Activated CD4-positive, alpha-beta memory T cell treated with anti-CD3 and anti-CD28 coated beads for 36 hours (primary cell): ENCODE measurements at regions of chr22 and their contacts with region 1.

Region 1: DNA sequence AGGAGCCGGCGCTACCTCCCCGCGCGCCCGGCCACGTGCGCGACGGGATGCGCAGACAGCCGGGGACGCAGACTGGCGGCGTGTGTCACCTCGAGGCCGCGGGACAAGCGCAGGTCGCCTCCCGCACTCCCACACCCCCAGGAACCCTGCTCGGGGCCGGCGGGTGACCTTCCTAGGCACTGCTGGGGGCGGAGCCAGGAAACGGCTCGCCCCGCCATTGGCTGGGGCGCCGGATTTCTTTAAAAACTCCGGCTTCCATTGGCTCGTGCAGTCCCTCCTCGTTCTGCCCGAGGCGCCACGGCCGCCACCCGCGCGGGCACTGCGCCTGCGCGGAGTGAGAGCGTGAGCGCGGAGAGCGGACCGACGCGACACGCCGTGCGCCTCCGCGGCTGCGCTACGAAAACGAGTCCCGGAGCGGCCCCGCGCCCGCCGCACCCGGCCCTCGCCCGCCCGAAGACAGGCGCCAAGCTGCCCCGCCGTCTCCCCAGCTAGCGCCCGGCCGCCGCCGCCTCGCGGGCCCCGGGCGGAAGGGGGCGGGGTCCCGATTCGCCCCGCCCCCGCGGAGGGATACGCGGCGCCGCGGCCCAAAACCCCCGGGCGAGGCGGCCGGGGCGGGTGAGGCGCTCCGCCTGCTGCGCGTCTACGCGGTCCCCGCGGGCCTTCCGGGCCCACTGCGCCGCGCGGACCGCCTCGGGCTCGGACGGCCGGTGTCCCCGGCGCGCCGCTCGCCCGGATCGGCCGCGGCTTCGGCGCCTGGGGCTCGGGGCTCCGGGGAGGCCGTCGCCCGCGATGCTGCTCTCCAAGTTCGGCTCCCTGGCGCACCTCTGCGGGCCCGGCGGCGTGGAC is at the start of gene PIM3:
- DNase-seq: peak; percentile 97
- H3K4me3 Mint-ChIP-seq: peak within 1 kb of the TSS; percentile 92
- H3K27ac Mint-ChIP-seq: peak within 1 kb of the TSS; percentile 96
- H3K4me1 Mint-ChIP-seq: peaks cover 22% of the 10 kb centered on the region
- H3K27me3 Mint-ChIP-seq: no peaks in the 10 kb centered on the region
- total RNA-seq, gene PIM3: 222 to 231 TPM

Region 2: DNA sequence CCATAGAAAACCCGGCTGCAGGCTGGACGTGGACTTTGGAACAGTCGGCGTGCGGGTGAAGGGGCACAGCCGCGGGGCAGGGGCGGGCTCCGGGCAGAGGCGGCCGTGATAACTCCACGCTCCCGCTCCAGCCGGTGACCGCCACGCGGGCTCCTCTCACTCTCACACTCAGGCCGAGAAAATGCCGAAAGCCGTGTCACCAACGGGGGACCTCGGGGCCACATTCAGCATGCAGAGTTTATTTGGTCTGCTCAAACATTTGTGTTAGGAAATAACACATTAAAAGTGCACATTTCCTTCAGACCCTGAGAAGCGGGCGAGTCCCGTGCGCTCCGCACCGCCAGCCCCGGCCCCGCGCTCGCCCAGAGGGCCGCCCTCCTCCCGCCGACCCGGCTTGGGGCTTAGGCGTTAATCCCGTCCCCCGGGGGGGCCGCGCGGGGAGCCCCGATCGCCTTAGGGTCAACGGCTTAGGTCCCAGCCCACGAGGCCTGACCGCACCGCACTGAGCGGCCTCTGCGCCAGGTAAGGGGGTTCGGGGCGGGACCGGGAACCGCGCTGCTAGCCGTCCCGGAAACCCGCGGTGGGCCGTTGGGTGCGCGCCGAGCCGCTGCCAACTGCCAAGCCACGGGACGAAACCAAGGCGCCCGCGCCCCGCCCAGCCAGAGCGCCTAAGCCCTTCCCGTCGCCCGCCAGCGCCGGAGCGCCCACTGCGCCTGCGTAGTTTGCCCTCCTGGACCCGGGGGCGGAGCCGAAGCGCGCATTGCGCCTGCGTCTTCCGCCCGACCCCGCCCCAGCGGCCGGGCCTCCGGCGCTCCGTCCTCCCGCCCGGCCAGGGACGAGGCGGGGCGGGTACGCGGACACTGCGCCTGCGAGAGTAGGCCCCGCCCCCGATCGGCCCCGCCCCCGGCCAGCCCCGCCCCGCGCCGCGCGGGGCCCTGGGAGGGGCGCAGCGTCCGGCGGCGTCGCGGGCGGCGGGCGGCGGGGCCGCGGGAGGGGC is 107.2 kb before region 1 on chr22 and contains the start of gene ZBED4:
- CTCF ChIA-PET with region 1: no interaction called
- POLR2A ChIA-PET with region 1: no interaction called
- intact Hi-C with region 1: loop called (anchors 5 kb)
- DNase-seq: peak; percentile 99
- H3K4me3 Mint-ChIP-seq: peak within 1 kb of the TSS; percentile 86
- H3K27ac Mint-ChIP-seq: peak within 1 kb of the TSS; percentile 80
- H3K4me1 Mint-ChIP-seq: peaks cover 36% of the 10 kb centered on the region
- H3K27me3 Mint-ChIP-seq: peaks cover 3% of the 10 kb centered on the region
- total RNA-seq, gene ZBED4: 18.4 TPM

Region 3: DNA sequence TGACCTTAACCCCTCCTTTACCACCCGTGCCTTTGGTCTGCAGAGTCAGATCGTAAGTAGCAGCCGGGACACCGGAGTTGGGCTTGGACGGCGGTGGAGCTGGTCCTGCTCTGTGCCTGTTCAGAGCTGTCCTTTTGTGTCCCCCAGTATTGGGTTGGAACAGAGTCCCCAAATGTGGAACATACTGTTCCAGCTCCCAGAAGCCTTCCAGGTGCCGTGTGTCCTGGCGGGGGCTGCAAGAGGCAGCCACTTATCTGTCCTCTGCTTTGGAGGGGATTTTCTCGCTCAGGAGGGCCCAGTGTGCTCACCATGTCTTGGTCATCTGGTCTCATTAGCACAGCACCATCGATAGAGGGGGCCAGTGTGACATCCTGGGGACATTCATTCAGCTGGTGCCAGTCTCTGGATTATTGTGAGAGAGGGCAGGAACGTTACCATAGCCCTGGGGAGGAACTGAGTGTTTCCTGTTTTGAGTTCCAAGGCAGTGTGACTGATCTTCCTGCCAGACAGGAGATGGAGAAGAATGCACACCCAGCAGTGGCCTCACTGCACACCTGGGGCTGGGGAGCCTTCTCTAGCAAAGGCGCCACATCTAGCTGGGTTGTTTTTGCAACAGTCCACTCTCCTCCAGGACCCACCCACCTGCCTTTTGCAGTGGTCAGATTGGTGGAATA is 29.5 kb before region 1 on chr22:
- CTCF ChIA-PET with region 1: interaction called, 9 read pairs
- POLR2A ChIA-PET with region 1: interaction called, 58 read pairs
- intact Hi-C with region 1: loop called (anchors 1 kb)
- DNase-seq: peak; percentile 77
- H3K4me3 Mint-ChIP-seq: peak overlapping the region; percentile 6
- H3K27ac Mint-ChIP-seq: peak overlapping the region; percentile 66
- H3K4me1 Mint-ChIP-seq: peaks cover 40% of the 10 kb centered on the region
- H3K27me3 Mint-ChIP-seq: no peaks in the 10 kb centered on the region

Region 4: GRCh38 chr22:49936018-49936952 is 24.1 kb before region 1 on chr22:
- CTCF ChIA-PET with region 1: interaction called, 9 read pairs
- POLR2A ChIA-PET with region 1: interaction called, 58 read pairs
- intact Hi-C with region 1: loop called (anchors 1 kb)
- DNase-seq: peak; percentile 99
- H3K4me3 Mint-ChIP-seq: peak overlapping the region; percentile 51
- H3K27ac Mint-ChIP-seq: peak overlapping the region; percentile 91
- H3K4me1 Mint-ChIP-seq: peaks cover 36% of the 10 kb centered on the region
- H3K27me3 Mint-ChIP-seq: no peaks in the 10 kb centered on the region

Region 5: DNA sequence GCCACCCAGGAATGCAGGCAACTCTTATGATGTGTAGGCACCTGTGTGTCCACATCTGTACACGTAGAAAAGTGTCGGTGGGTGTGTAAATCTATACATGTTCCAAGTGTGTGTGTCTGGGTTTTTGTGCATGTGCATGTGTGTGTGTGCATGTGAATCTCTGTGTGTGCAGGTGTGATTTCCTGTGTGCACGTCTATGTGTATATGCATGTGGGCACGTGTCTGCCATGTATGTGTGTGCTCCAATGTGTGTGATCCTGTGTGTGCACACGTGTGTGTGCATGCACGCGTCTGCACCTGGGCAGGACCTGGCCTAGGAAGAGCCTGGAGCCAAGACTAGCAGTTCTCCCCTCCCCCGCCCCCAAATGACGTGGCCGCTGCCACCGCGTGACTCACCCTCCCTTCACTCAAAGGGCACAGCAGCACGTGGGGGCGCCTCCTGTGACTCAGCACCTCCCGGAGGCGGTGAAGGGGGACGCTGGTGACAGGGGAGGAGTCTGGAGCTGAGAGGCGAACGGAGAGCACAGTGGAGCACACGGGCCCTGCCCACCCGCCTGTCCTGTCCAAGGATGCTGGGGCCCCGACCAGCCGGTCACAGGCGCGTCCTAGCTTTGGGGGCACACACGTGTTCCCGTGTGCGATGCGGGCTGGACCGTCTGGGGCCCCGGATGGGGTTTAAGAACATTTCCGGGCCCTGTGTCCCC is 10.3 kb after region 1 on chr22:
- CTCF ChIA-PET with region 1: interaction called, 9 read pairs
- POLR2A ChIA-PET with region 1: interaction called, 54 read pairs
- intact Hi-C with region 1: no loop called
- DNase-seq: peak; percentile 99
- H3K4me3 Mint-ChIP-seq: peak overlapping the region; percentile 80
- H3K27ac Mint-ChIP-seq: peak overlapping the region; percentile 93
- H3K4me1 Mint-ChIP-seq: peaks cover 34% of the 10 kb centered on the region
- H3K27me3 Mint-ChIP-seq: no peaks in the 10 kb centered on the region

Region 6: DNA sequence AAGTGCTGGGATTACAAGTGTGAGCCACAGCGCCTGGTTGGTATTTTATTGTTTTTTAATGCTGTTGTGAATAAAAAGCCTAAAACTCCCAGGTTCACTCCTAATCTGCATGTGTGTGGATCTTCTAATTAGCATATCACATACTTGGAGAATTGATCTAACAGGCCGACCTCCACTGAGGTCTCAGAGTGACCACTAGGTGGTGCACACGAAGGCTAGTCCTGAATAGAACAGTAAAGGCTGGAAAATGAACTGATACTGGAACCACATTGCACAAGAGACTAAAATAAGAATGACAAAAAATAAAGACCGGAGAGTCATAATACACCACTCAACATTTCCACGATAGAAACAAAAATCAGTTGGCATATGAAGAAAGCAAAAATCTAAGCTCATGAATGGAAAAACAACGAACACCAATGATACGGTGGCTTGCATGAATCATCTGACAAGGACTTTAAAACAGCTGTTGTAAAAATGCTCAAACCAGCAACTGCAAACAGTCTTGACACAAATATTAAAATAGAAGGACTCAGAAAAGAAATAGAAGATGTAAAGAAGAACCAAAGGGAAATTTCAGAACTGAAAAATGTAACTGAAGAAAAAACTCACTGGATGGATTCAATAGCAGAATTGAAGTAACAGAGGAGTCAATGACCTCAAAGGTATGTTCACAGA is 19.3 kb after region 1 on chr22:
- CTCF ChIA-PET with region 1: interaction called, 6 read pairs
- POLR2A ChIA-PET with region 1: interaction called, 8 read pairs
- intact Hi-C with region 1: loop called (anchors 2 kb)
- DNase-seq: peak; percentile 68
- H3K4me3 Mint-ChIP-seq: peak overlapping the region; percentile 42
- H3K27ac Mint-ChIP-seq: peak overlapping the region; percentile 83
- H3K4me1 Mint-ChIP-seq: peaks cover 44% of the 10 kb centered on the region
- H3K27me3 Mint-ChIP-seq: peaks cover 4% of the 10 kb centered on the region

Region 7: GRCh38 chr22:50185384-50186087 is 225.2 kb after region 1 on chr22 and contains the start of gene TRABD:
- CTCF ChIA-PET with region 1: no interaction called
- POLR2A ChIA-PET with region 1: interaction called, 3 read pairs
- intact Hi-C with region 1: loop called (anchors 5 kb)
- DNase-seq: peak; percentile 93
- H3K4me3 Mint-ChIP-seq: peak within 1 kb of the TSS; percentile 88
- H3K27ac Mint-ChIP-seq: peak within 1 kb of the TSS; percentile 89
- H3K4me1 Mint-ChIP-seq: peaks cover 28% of the 10 kb centered on the region
- H3K27me3 Mint-ChIP-seq: no peaks in the 10 kb centered on the region
- total RNA-seq, gene TRABD: 88.6 to 89.2 TPM

Region 8: GRCh38 chr22:50271519-50271970 is 311.2 kb after region 1 on chr22:
- CTCF ChIA-PET with region 1: no interaction called
- POLR2A ChIA-PET with region 1: no interaction called
- intact Hi-C with region 1: no loop called
- DNase-seq: peak; percentile 67
- H3K4me3 Mint-ChIP-seq: no peak overlapping the region
- H3K27ac Mint-ChIP-seq: no peak overlapping the region
- H3K4me1 Mint-ChIP-seq: peaks cover 8% of the 10 kb centered on the region
- H3K27me3 Mint-ChIP-seq: no peaks in the 10 kb centered on the region